ENCODE measurements at regions of chr1 and their contacts with region 1.

Region 1: DNA sequence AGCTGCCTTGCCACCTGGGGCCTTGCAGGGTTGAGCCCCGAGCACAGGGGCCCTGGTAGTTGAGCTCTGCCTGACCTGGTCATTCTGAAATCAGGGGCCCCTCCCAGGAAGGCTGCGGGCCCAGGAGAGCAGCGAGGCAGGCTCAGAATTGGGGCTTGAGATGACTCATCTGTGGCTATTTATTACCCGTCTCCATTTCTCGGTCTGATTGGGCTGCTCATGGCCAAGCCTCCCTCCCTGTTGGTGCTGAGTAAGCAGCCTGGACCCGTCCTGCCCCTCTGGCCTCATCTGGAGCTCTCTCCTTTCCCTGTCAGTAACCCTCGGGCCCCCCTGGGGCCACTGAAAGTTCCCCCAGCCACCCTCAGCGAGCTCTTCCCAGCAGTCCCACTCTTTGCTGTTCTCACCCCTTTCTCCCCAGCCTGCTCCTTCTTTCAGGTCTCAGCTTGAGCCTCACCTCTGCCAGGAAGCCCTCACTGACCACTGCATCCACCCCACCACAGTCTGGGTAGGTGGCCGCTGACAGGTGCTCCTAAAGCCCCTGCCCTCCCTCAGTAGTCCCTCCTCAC is 11.0 kb upstream of the TNFRSF8 start:
- DNase-seq: peak; percentile 96
- ATAC-seq: peak; percentile 79
- H3K4me3 ChIP-seq: peak overlapping the region; percentile 45; the same call in 1 of the 2 replicates
- H3K27ac ChIP-seq: peak overlapping the region; percentile 100
- H3K4me1 ChIP-seq: peaks cover 93% of the 10 kb centered on the region
- H3K27me3 ChIP-seq: no peaks in the 10 kb centered on the region
- CTCF ChIP-seq: no peak
- EP300 ChIP-seq: peak; percentile 79 to 95
- POLR2A ChIP-seq: peak; percentile 56; the same call in 1 of the 2 replicates
- RAD21 ChIP-seq: peak; percentile 19

Region 2: GRCh38 chr1:12001249-12001917 is 50.7 kb before region 1 on chr1:
- CTCF ChIA-PET with region 1: interaction called, 4 read pairs
- POLR2A ChIA-PET with region 1: interaction called, 3 read pairs
- RAD21 ChIA-PET with region 1: no interaction called
- SMC1A ChIA-PET with region 1: interaction called, 4 read pairs
- in situ Hi-C with region 1: no loop called
- intact Hi-C with region 1: loop called (anchors 5 kb)
- DNase-seq: no peak
- ATAC-seq: peak; percentile 27
- H3K4me3 ChIP-seq: no peak overlapping the region
- H3K27ac ChIP-seq: no peak overlapping the region
- H3K4me1 ChIP-seq: peaks cover 22% of the 10 kb centered on the region
- H3K27me3 ChIP-seq: no peaks in the 10 kb centered on the region
- CTCF ChIP-seq: peak; percentile 64 to 73 (median 67)
- EP300 ChIP-seq: no peak
- POLR2A ChIP-seq: no peak
- RAD21 ChIP-seq: peak; percentile 70

Region 3: DNA sequence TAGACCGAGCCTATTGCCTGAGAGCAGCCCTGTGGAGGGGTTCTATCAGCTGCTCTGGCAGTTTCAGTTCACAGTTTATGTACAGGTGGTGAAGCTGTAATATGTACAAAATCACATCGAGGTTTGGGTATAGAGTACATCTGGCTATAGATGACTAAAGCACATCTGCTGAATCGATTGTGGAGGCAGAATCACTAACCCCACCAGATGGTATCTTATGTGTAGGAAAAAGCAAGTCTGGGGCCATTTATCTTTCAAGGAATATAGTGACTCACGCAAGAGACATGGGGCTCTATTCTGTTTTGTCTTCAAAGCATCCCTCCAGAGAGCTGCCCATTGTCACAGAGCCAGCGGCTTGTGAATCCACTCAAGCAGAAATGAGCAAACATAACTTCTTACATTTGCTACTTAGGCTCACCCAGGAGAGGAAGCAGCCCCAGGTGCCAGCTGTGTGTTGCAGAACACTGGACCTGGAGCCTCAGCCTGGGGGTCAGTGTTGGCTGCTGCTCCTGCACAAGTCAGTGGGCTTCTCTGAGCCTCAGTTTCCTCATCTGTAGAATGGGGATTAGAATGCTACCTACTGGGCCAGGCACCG is 11.5 kb before region 1 on chr1:
- CTCF ChIA-PET with region 1: interaction called, 19 read pairs
- POLR2A ChIA-PET with region 1: interaction called, 57 read pairs
- RAD21 ChIA-PET with region 1: interaction called, 61 read pairs
- SMC1A ChIA-PET with region 1: interaction called, 97 read pairs
- in situ Hi-C with region 1: no loop called
- intact Hi-C with region 1: no loop called
- DNase-seq: peak; percentile 79
- ATAC-seq: peak; percentile 80
- H3K4me3 ChIP-seq: peak overlapping the region; percentile 21; the same call in 1 of the 2 replicates
- H3K27ac ChIP-seq: peak overlapping the region; percentile 68
- H3K4me1 ChIP-seq: peaks cover 53% of the 10 kb centered on the region
- H3K27me3 ChIP-seq: no peaks in the 10 kb centered on the region
- CTCF ChIP-seq: no peak
- EP300 ChIP-seq: peak; percentile 51 to 60; a peak in 3 of 4 replicates
- POLR2A ChIP-seq: peak; percentile 46; the same call in 1 of the 2 replicates
- RAD21 ChIP-seq: peak; percentile 9; the same call in 1 of the 2 replicates

Region 4: DNA sequence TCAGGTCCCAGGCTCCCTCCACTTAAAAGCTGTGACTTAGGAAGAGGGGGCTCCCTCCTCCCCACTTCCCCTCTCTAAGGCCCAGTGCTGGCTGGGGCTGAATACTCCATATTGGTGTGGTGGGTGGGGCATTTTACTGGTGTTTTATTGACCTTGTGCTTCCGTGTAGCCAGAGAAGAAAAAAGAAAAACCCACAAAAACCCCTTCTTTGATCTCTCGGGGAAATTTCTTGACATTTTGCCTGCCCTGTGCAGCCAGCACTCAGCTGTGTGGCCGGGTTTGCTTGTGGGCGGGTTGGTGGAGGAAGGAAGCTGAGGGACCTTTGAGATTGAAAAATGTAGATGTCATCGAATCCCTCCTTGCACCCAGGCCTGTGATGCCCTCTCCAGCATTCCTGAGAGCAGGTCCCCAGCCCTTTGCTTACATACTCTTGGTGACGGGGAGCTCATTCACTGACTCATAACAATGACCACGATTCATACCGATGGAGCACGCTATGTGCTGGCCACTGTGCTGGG is 35.8 kb after region 1 on chr1:
- CTCF ChIA-PET with region 1: interaction called, 15 read pairs
- POLR2A ChIA-PET with region 1: interaction called, 10 read pairs
- RAD21 ChIA-PET with region 1: interaction called, 7 read pairs
- SMC1A ChIA-PET with region 1: interaction called, 4 read pairs
- in situ Hi-C with region 1: no loop called
- intact Hi-C with region 1: no loop called
- DNase-seq: peak; percentile 76
- ATAC-seq: peak; percentile 91
- H3K4me3 ChIP-seq: no peak overlapping the region
- H3K27ac ChIP-seq: peak overlapping the region; percentile 67
- H3K4me1 ChIP-seq: peaks cover 22% of the 10 kb centered on the region
- H3K27me3 ChIP-seq: no peaks in the 10 kb centered on the region
- CTCF ChIP-seq: no peak
- EP300 ChIP-seq: peak; percentile 10 to 56; a peak in 1 of 4 replicates
- POLR2A ChIP-seq: no peak
- RAD21 ChIP-seq: no peak

Region 5: GRCh38 chr1:12161662-12162458 is 109.8 kb after region 1 on chr1:
- CTCF ChIA-PET with region 1: no interaction called
- POLR2A ChIA-PET with region 1: interaction called, 4 read pairs
- RAD21 ChIA-PET with region 1: interaction called, 3 read pairs
- SMC1A ChIA-PET with region 1: no interaction called
- in situ Hi-C with region 1: no loop called
- intact Hi-C with region 1: loop called (anchors 5 kb)
- DNase-seq: peak; percentile 88
- ATAC-seq: peak; percentile 87
- H3K4me3 ChIP-seq: no peak overlapping the region
- H3K27ac ChIP-seq: peak overlapping the region; percentile 89
- H3K4me1 ChIP-seq: peaks cover 79% of the 10 kb centered on the region
- H3K27me3 ChIP-seq: no peaks in the 10 kb centered on the region
- CTCF ChIP-seq: no peak
- EP300 ChIP-seq: peak; percentile 77 to 88; a peak in 3 of 4 replicates
- POLR2A ChIP-seq: peak; percentile 69
- RAD21 ChIP-seq: no peak